PC-9 (cell line): ENCODE measurements at regions of chr3 and their contacts with region 1.

Region 1: DNA sequence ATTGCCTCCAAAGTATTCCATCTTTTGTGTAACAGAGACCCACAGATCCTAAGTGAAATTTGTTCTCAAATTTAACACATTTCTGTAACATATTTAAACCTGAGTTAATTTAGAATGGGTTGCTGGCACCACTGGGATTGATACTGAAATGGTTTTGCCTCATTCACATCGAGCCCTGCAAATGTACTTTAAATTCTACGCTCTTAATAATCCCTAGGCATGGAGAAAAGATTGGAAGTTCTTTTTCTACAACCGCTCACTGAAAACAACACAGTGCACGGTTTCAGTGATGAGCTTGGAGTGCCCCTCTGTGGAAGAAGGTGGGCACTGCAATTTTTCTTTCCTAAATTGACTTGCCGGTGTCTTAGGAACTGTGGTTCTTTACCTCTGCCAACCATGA is 109.9 kb upstream of the ATP11B start:
- DNase-seq: peak; percentile 72 to 81
- H3K4me3 ChIP-seq: peak overlapping the region; percentile 74; the same call in 1 of the 2 replicates
- H3K27ac ChIP-seq: no peak overlapping the region
- H3K4me1 ChIP-seq: peaks cover 17% of the 10 kb centered on the region
- H3K27me3 ChIP-seq: no peaks in the 10 kb centered on the region
- CTCF ChIP-seq: peak; percentile 99

Region 2: GRCh38 chr3:180912304-180913296 is 1770.9 kb before region 1 on chr3 and contains the start of gene FXR1:
- CTCF ChIA-PET with region 1: interaction called, 12 read pairs
- POLR2A ChIA-PET with region 1: no interaction called
- intact Hi-C with region 1: no loop called
- DNase-seq: peak; percentile 90 to 97
- H3K4me3 ChIP-seq: peak within 1 kb of the TSS; percentile 63
- H3K27ac ChIP-seq: peak within 1 kb of the TSS; percentile 64
- H3K4me1 ChIP-seq: peaks cover 21% of the 10 kb centered on the region
- H3K27me3 ChIP-seq: no peaks in the 10 kb centered on the region
- CTCF ChIP-seq: peak; percentile 69
- total RNA-seq, gene FXR1: 236 and 288 TPM in 2 replicates

Region 3: DNA sequence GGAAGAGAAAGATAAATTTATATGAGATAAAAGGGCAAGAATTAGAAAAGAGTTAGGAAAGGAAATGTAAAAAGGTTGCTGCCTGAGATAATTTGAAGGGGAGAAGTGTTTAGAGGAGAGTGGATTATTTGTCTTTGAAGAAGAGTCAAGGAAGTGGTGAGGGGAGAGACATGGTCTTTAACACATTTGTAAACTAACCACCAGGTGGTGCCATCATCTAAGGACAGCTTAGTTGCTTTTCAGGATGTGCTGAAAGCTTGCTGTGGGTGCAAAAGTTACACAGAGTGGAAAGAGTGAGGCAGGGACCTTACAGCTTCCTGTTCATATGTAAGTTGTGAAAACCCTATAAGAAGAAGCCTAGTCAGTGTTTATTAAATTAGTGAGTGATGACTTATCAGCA is 1579.8 kb before region 1 on chr3:
- CTCF ChIA-PET with region 1: no interaction called
- POLR2A ChIA-PET with region 1: no interaction called
- intact Hi-C with region 1: loop called (anchors 2 kb)
- DNase-seq: peak in 1 of 2 experiments; percentile 3
- H3K4me3 ChIP-seq: no peak overlapping the region
- H3K27ac ChIP-seq: no peak overlapping the region
- H3K4me1 ChIP-seq: no peaks in the 10 kb centered on the region
- H3K27me3 ChIP-seq: no peaks in the 10 kb centered on the region
- CTCF ChIP-seq: peak; percentile 75

Region 4: GRCh38 chr3:181326637-181327223 is 1356.7 kb before region 1 on chr3:
- CTCF ChIA-PET with region 1: no interaction called
- POLR2A ChIA-PET with region 1: no interaction called
- intact Hi-C with region 1: loop called (anchors 1 kb)
- DNase-seq: no peak
- H3K4me3 ChIP-seq: no peak overlapping the region
- H3K27ac ChIP-seq: no peak overlapping the region
- H3K4me1 ChIP-seq: no peaks in the 10 kb centered on the region
- H3K27me3 ChIP-seq: no peaks in the 10 kb centered on the region; the same call in 1 of the 2 replicates
- CTCF ChIP-seq: peak; percentile 94

Region 5: DNA sequence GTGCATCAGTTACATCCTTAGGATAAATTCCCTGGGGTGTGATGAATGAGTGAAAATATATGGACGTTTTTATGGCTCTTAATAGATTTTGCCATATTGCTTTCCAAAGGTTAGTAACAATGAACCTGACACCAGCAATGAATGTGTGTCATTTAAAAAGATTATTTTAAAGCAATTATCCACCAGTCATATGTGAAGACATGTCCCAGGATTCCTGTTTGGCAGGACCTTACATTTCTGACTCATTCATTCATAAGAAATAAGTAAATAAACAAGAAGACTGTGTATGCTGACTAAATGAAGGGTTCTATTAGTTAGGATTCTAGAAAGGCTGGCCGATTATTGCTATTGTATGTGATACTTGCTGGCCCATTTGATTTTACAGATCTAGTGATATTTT is 770.2 kb before region 1 on chr3:
- CTCF ChIA-PET with region 1: no interaction called
- POLR2A ChIA-PET with region 1: no interaction called
- intact Hi-C with region 1: no loop called
- DNase-seq: peak in 1 of 2 experiments; percentile 61
- H3K4me3 ChIP-seq: no peak overlapping the region
- H3K27ac ChIP-seq: no peak overlapping the region
- H3K4me1 ChIP-seq: peaks cover 8% of the 10 kb centered on the region
- H3K27me3 ChIP-seq: no peaks in the 10 kb centered on the region
- CTCF ChIP-seq: no peak

Region 6: GRCh38 chr3:182258538-182259177 is 424.8 kb before region 1 on chr3:
- CTCF ChIA-PET with region 1: no interaction called
- POLR2A ChIA-PET with region 1: no interaction called
- intact Hi-C with region 1: loop called (anchors 1 kb)
- DNase-seq: peak; percentile 24 to 55
- H3K4me3 ChIP-seq: no peak overlapping the region
- H3K27ac ChIP-seq: no peak overlapping the region
- H3K4me1 ChIP-seq: no peaks in the 10 kb centered on the region
- H3K27me3 ChIP-seq: no peaks in the 10 kb centered on the region
- CTCF ChIP-seq: peak; percentile 93

Region 7: GRCh38 chr3:183548262-183548769 is 864.9 kb after region 1 on chr3:
- CTCF ChIA-PET with region 1: no interaction called
- POLR2A ChIA-PET with region 1: no interaction called
- intact Hi-C with region 1: no loop called
- DNase-seq: peak; percentile 75 to 77
- H3K4me3 ChIP-seq: no peak overlapping the region
- H3K27ac ChIP-seq: no peak overlapping the region
- H3K4me1 ChIP-seq: no peaks in the 10 kb centered on the region
- H3K27me3 ChIP-seq: no peaks in the 10 kb centered on the region
- CTCF ChIP-seq: no peak